ENCODE measurements at regions of chr3 and their contacts with region 1.

Region 1: GRCh38 chr3:149151843-149152242 is 22.4 kb downstream of the HPS3 start:
- DNase-seq: no peak
- ATAC-seq: no peak
- H3K4me3 Mint-ChIP-seq: no peak overlapping the region
- H3K27ac Mint-ChIP-seq: no peak overlapping the region
- H3K4me1 Mint-ChIP-seq: peaks cover 8% of the 10 kb centered on the region
- H3K27me3 Mint-ChIP-seq: no peaks in the 10 kb centered on the region

Region 2: GRCh38 chr3:149167898-149168297 is 16.1 kb after region 1 on chr3:
- CTCF ChIA-PET with region 1: interaction called, 4 read pairs
- POLR2A ChIA-PET with region 1: no interaction called
- intact Hi-C with region 1: loop called in 1 of 2 experiments (anchors 2 kb)
- DNase-seq: no peak
- ATAC-seq: no peak
- H3K4me3 Mint-ChIP-seq: no peak overlapping the region
- H3K27ac Mint-ChIP-seq: no peak overlapping the region
- H3K4me1 Mint-ChIP-seq: no peaks in the 10 kb centered on the region
- H3K27me3 Mint-ChIP-seq: no peaks in the 10 kb centered on the region

Region 3: GRCh38 chr3:149572796-149573414 is 421.1 kb after region 1 on chr3:
- CTCF ChIA-PET with region 1: no interaction called
- POLR2A ChIA-PET with region 1: no interaction called
- intact Hi-C with region 1: no loop called
- DNase-seq: no peak
- ATAC-seq: no peak
- H3K4me3 Mint-ChIP-seq: no peak overlapping the region
- H3K27ac Mint-ChIP-seq: no peak overlapping the region
- H3K4me1 Mint-ChIP-seq: peaks cover 22% of the 10 kb centered on the region
- H3K27me3 Mint-ChIP-seq: no peaks in the 10 kb centered on the region

Region 4: GRCh38 chr3:149625795-149626194 is 474.0 kb after region 1 on chr3:
- CTCF ChIA-PET with region 1: no interaction called
- POLR2A ChIA-PET with region 1: no interaction called
- intact Hi-C with region 1: no loop called
- DNase-seq: no peak
- ATAC-seq: no peak
- H3K4me3 Mint-ChIP-seq: no peak overlapping the region
- H3K27ac Mint-ChIP-seq: no peak overlapping the region
- H3K4me1 Mint-ChIP-seq: peaks cover 8% of the 10 kb centered on the region
- H3K27me3 Mint-ChIP-seq: peaks cover 13% of the 10 kb centered on the region